Endothelial cell of umbilical vein (primary cell): ENCODE measurements at regions of chr16 and their contacts with region 1.

Region 1: DNA sequence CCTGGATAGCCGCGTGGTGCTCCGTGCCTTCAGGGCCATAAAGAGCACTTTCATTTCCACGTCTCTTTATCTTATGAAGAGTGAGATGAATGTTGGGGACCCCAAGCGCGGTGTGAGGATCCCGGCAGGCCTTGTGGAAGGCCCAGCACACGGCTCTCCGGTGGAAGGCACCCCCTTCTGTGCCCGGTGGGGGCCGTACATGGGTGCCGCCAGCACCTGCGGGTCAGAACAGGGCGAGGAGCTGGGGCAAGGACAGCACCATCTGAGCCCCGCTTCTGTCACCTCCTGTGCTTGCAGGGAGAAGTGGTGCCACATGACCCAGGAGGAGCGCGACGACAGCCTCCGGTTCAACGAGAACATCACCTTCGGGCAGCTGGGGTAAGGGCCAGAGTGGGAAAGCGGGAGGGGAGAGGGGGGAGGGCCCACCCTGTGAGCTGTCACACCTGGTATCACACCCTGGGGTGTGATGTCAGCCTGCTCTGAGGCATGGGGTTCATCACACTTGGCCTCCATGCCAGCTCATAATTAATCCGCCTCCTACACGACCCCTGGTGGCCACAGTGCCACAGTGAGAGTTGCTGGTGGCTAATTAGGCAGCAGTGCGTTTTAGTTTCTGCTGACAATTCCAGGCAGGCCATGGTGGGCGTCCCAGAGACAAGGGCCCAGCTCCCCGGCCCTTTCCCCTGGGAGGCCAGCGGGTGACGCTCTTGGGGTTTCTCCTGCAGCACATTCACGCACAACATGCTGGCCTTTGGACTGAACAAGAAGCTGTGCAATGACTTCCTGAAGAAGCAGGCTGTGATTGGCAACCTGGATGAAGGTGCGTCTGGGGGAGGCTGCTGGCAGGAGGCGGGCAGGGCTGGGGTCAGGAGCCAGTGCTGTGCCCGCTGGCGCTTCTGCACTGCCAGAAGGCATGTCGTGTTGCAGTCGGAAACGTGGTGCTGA is 25.7 kb downstream of the CIBAR2 start:
- DNase-seq: peak; percentile 63
- H3K4me3 ChIP-seq: no peak overlapping the region
- H3K27ac ChIP-seq: no peak overlapping the region
- H3K4me1 ChIP-seq: no peaks in the 10 kb centered on the region
- H3K27me3 ChIP-seq: peaks cover 3 to 7% of the 10 kb centered on the region in 2 experiments
- CTCF ChIP-seq: peak; percentile 77 to 81
- POLR2A ChIP-seq: no peak

Region 2: DNA sequence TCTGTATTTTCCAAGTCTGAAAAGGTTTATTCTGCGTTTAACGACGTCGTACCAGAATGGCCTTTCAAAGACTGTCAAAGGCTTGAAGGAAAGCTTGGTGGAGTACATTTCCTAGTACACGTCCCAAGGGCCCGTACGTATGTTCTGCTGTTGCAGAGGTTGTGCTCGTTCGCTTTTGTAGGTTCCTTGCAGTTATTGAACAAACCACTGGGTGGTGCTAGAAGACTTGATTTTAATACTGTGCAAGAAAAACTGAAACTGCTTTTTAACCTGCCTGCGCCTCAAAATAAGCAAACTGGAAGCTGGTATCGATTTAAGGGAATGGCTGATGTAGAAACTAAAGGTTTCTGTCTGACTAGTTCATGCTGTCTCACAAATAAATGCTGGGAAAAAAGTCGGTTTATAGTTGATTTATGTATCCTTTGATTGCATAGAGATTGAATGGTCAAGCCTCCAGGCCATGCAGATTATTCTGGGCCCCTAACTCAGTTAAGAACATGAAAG is 332.2 kb before region 1 on chr16:
- CTCF ChIA-PET with region 1: interaction called, 37 read pairs
- POLR2A ChIA-PET with region 1: no interaction called
- dilution Hi-C with region 1: no loop called
- intact Hi-C with region 1: loop called (anchors 10 kb)
- DNase-seq: peak; percentile 89
- H3K4me3 ChIP-seq: no peak overlapping the region
- H3K27ac ChIP-seq: no peak overlapping the region
- H3K4me1 ChIP-seq: peaks cover 20% of the 10 kb centered on the region
- H3K27me3 ChIP-seq: no peaks in the 10 kb centered on the region
- CTCF ChIP-seq: peak; percentile 64 to 70
- POLR2A ChIP-seq: no peak

Region 3: GRCh38 chr16:84952335-84953189 is 134.1 kb before region 1 on chr16:
- CTCF ChIA-PET with region 1: interaction called, 10 read pairs
- POLR2A ChIA-PET with region 1: no interaction called
- dilution Hi-C with region 1: no loop called
- intact Hi-C with region 1: no loop called
- DNase-seq: peak; percentile 87
- H3K4me3 ChIP-seq: no peak overlapping the region
- H3K27ac ChIP-seq: no peak overlapping the region
- H3K4me1 ChIP-seq: no peaks in the 10 kb centered on the region
- H3K27me3 ChIP-seq: peaks cover 0 to 2% of the 10 kb centered on the region in 2 experiments
- CTCF ChIP-seq: peak; percentile 88 to 90
- POLR2A ChIP-seq: no peak

Region 4: GRCh38 chr16:84995663-84996062 is 91.0 kb before region 1 on chr16:
- CTCF ChIA-PET with region 1: interaction called, 23 read pairs
- POLR2A ChIA-PET with region 1: no interaction called
- dilution Hi-C with region 1: no loop called
- intact Hi-C with region 1: no loop called
- DNase-seq: no peak
- H3K4me3 ChIP-seq: no peak overlapping the region
- H3K27ac ChIP-seq: peak overlapping the region; percentile 89
- H3K4me1 ChIP-seq: peaks cover 26% of the 10 kb centered on the region
- H3K27me3 ChIP-seq: no peaks in the 10 kb centered on the region
- CTCF ChIP-seq: no peak
- POLR2A ChIP-seq: no peak

Region 5: GRCh38 chr16:85027349-85027957 is 59.2 kb before region 1 on chr16 and contains the start of gene KIAA0513:
- CTCF ChIA-PET with region 1: interaction called, 32 read pairs
- POLR2A ChIA-PET with region 1: no interaction called
- dilution Hi-C with region 1: no loop called
- intact Hi-C with region 1: loop called (anchors 5 kb)
- DNase-seq: peak; percentile 94
- H3K4me3 ChIP-seq: peak within 1 kb of the TSS; percentile 65 to 90 (median 90)
- H3K27ac ChIP-seq: peak within 1 kb of the TSS; percentile 73
- H3K4me1 ChIP-seq: peaks cover 24% of the 10 kb centered on the region
- H3K27me3 ChIP-seq: no peaks in the 10 kb centered on the region
- CTCF ChIP-seq: peak in 1 of 2 donors; percentile 33
- POLR2A ChIP-seq: peak; percentile 94
- total RNA-seq, gene KIAA0513: 3.6 and 4.3 TPM in 2 replicates

Region 6: GRCh38 chr16:85055503-85056210 is 31.0 kb before region 1 on chr16:
- CTCF ChIA-PET with region 1: interaction called, 123 read pairs
- POLR2A ChIA-PET with region 1: no interaction called
- dilution Hi-C with region 1: no loop called
- intact Hi-C with region 1: loop called (anchors 1 kb)
- DNase-seq: peak; percentile 72
- H3K4me3 ChIP-seq: peak overlapping the region in 1 of 3 experiments; percentile 47
- H3K27ac ChIP-seq: peak overlapping the region; percentile 5
- H3K4me1 ChIP-seq: peaks cover 9% of the 10 kb centered on the region
- H3K27me3 ChIP-seq: no peaks in the 10 kb centered on the region
- CTCF ChIP-seq: no peak
- POLR2A ChIP-seq: no peak

Region 7: GRCh38 chr16:85104821-85105391 is 18.3 kb after region 1 on chr16:
- CTCF ChIA-PET with region 1: interaction called, 11 read pairs
- POLR2A ChIA-PET with region 1: no interaction called
- dilution Hi-C with region 1: no loop called
- intact Hi-C with region 1: no loop called
- DNase-seq: no peak
- H3K4me3 ChIP-seq: no peak overlapping the region
- H3K27ac ChIP-seq: no peak overlapping the region
- H3K4me1 ChIP-seq: no peaks in the 10 kb centered on the region
- H3K27me3 ChIP-seq: no peaks in the 10 kb centered on the region
- CTCF ChIP-seq: no peak
- POLR2A ChIP-seq: no peak

Region 8: GRCh38 chr16:85384840-85385462 is 298.3 kb after region 1 on chr16:
- CTCF ChIA-PET with region 1: no interaction called
- POLR2A ChIA-PET with region 1: no interaction called
- dilution Hi-C with region 1: no loop called
- intact Hi-C with region 1: no loop called
- DNase-seq: no peak
- H3K4me3 ChIP-seq: no peak overlapping the region
- H3K27ac ChIP-seq: no peak overlapping the region
- H3K4me1 ChIP-seq: no peaks in the 10 kb centered on the region
- H3K27me3 ChIP-seq: no peaks in the 10 kb centered on the region
- CTCF ChIP-seq: no peak
- POLR2A ChIP-seq: no peak

Region 9: DNA sequence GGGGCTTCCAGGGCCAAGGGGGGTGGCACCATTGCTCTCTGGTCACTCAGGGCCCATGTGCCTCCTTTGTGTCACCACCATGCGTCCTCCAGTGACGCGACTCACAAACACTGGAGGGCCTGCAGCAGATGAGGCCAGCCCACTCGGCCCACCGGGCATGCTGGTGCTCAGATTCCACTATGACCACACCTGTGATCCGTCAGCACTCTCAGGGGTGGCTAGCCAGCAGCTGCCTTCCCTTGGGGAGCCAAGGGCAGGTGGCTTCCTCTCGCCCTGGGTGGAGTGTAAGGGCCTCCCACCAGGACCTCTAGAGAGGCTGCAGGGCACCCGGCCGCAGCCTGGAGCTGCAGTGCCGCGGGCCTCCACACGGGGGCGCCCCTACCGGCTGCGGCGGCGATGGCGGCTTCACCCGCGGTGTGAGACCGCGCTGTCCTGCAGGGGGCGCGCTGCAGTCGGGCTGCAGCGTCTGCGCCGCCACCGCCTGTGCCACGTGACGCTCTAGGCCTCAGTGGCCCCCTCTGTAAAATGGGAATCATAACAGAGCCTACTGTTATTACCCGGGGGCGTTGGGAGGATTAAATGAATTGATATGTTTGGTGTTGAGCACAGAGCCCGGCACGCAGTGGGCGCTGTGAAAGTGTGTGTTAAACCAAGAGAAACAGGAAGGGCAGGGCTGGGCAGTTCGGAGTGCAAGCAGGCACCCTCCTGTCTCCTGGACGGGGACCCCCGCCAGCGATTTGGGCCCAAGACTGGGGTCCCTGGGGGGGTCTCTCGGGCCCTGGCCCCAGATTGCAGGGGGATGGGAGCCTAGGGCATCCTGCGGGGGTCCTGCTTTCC is 334.1 kb after region 1 on chr16:
- CTCF ChIA-PET with region 1: no interaction called
- POLR2A ChIA-PET with region 1: no interaction called
- dilution Hi-C with region 1: no loop called
- intact Hi-C with region 1: no loop called
- DNase-seq: peak; percentile 30
- H3K4me3 ChIP-seq: no peak overlapping the region
- H3K27ac ChIP-seq: no peak overlapping the region
- H3K4me1 ChIP-seq: no peaks in the 10 kb centered on the region
- H3K27me3 ChIP-seq: no peaks in the 10 kb centered on the region
- CTCF ChIP-seq: peak; percentile 96 to 100
- POLR2A ChIP-seq: no peak